ENCODE measurements at regions of chr12 and their contacts with region 1.

Region 1: DNA sequence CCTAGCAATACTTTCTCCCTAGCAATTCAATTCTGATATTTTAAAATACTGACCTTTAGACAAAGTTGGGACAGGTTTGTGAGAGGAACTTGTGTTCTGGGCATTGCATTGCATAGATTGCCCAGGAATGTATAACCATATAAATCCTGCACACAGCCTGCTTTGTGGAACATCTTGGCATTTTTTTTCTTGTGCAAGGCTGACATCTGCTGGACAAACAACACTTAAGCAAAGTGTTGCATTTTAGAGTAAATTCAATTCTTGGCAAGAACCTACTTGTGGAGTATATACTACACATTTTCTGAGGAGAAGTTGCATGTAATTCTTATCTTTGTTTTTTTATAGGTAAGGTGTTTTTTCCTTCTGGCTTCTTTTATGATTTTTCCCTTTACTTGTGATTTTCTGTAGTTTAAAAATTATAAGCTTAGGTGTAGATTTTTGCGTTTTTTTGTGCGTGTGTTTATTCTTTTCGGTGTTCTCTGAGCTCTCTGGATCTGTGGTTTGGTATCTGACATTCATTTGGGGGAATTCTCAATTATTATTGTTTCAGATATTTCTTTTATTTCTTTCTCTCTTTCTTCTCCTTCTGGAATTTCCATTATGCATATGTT is 26.4 kb downstream of the TESPA1 start:
- DNase-seq: peak in 2 of 5 donors; percentile 28 to 39
- ATAC-seq: peak in 2 of 4 donors; percentile 32 to 54
- H3K4me3 ChIP-seq: no peak overlapping the region
- H3K27ac ChIP-seq: no peak overlapping the region
- H3K4me1 ChIP-seq: peaks cover 0 to 21% (median 0%) of the 10 kb centered on the region in 12 donors
- H3K27me3 ChIP-seq: peaks cover 0 to 9% (median 0%) of the 10 kb centered on the region in 9 donors
- CTCF ChIP-seq: peak; percentile 40 to 78 (median 66)
- POLR2A ChIP-seq: no peak

Region 2: GRCh38 chr12:54579696-54580333 is 378.3 kb before region 1 on chr12:
- intact Hi-C with region 1: loop called in 1 of 10 experiments (anchors 5 kb)
- DNase-seq: peak; percentile 78 to 90 (median 81)
- ATAC-seq: peak; percentile 90 to 95 (median 92)
- H3K4me3 ChIP-seq: no peak overlapping the region
- H3K27ac ChIP-seq: peak overlapping the region in 1 of 12 donors; percentile 20
- H3K4me1 ChIP-seq: peaks cover 0 to 9% (median 0%) of the 10 kb centered on the region in 12 donors
- H3K27me3 ChIP-seq: peaks cover 0 to 8% (median 0%) of the 10 kb centered on the region in 9 donors
- CTCF ChIP-seq: peak; percentile 98 to 100 (median 99)
- POLR2A ChIP-seq: no peak

Region 3: GRCh38 chr12:54603173-54603814 is 354.9 kb before region 1 on chr12:
- intact Hi-C with region 1: loop called in 9 of 10 experiments (anchors 5 to 10 kb)
- DNase-seq: peak in 2 of 5 donors; percentile 40 to 53
- ATAC-seq: peak in 3 of 4 donors; percentile 65 to 82 (median 79)
- H3K4me3 ChIP-seq: no peak overlapping the region
- H3K27ac ChIP-seq: no peak overlapping the region
- H3K4me1 ChIP-seq: no peaks in the 10 kb centered on the region
- H3K27me3 ChIP-seq: no peaks in the 10 kb centered on the region
- CTCF ChIP-seq: peak; percentile 51 to 82 (median 68)
- POLR2A ChIP-seq: no peak

Region 4: DNA sequence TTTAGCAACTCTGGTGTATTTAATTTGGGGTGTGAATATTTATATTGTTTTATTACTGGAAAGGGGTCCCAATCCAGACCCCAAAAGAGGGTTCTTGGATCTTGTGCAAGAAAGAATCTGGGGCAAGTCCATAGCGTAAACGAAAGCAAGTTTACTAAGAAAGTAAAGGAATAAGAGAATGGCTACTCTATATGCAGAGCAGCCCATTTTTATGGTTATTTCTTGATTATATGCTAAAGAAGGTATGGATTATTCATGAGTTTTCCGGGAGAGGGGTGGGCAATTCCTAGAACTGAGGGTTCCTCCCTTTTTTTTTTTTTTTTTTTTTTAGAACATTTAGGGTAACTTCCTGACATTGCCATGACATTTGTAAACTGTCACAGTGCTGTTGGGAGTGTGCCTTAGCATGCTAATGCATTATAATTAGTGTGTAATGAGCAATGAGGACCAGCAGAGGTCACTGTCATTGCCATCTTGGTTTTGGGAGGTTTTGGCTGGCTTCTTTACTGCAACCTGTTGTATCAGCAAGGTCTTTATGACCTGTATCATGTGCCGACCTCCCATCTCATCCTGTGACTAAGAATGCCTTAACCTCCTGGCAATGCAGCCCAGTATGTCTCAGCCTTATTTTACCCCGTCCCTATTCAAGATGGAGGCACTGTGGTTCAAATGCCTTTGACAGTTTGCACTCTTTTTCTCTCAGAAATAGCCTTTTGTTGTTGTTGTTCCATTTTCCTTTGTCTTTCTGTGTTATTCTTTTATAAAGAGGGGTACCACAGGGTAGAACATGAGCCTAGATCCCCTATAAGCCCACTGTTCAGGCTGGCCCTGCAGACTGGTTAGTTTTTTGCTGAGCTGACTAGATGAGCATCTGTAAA is 234.5 kb before region 1 on chr12:
- intact Hi-C with region 1: loop called in 2 of 10 experiments (anchors 5 to 10 kb)
- DNase-seq: no peak
- ATAC-seq: no peak
- H3K4me3 ChIP-seq: no peak overlapping the region
- H3K27ac ChIP-seq: no peak overlapping the region
- H3K4me1 ChIP-seq: no peaks in the 10 kb centered on the region
- H3K27me3 ChIP-seq: peaks cover 0 to 25% (median 4%) of the 10 kb centered on the region in 9 donors
- CTCF ChIP-seq: peak in 11 of 12 donors; percentile 27 to 51 (median 35)
- POLR2A ChIP-seq: no peak

Region 5: GRCh38 chr12:54853995-54854566 is 104.1 kb before region 1 on chr12 and contains the start of gene MUCL1:
- intact Hi-C with region 1: loop called in 7 of 10 experiments (anchors 2 to 10 kb)
- DNase-seq: peak in 2 of 5 donors; percentile 20 to 21
- ATAC-seq: peak in 3 of 4 donors; percentile 59 to 75 (median 59)
- H3K4me3 ChIP-seq: no peak within 1 kb of the TSS
- H3K27ac ChIP-seq: no peak within 1 kb of the TSS
- H3K4me1 ChIP-seq: peaks cover 0 to 5% (median 0%) of the 10 kb centered on the region in 12 donors
- H3K27me3 ChIP-seq: no peaks in the 10 kb centered on the region
- CTCF ChIP-seq: peak; percentile 35 to 84 (median 54)
- POLR2A ChIP-seq: no peak
- total RNA-seq, gene MUCL1: not detected

Region 6: GRCh38 chr12:54891717-54892554 is 66.2 kb before region 1 on chr12:
- intact Hi-C with region 1: no loop called
- DNase-seq: no peak
- ATAC-seq: no peak
- H3K4me3 ChIP-seq: no peak overlapping the region
- H3K27ac ChIP-seq: no peak overlapping the region
- H3K4me1 ChIP-seq: no peaks in the 10 kb centered on the region
- H3K27me3 ChIP-seq: peaks cover 0 to 4% (median 0%) of the 10 kb centered on the region in 9 donors
- CTCF ChIP-seq: no peak
- POLR2A ChIP-seq: no peak

Region 7: DNA sequence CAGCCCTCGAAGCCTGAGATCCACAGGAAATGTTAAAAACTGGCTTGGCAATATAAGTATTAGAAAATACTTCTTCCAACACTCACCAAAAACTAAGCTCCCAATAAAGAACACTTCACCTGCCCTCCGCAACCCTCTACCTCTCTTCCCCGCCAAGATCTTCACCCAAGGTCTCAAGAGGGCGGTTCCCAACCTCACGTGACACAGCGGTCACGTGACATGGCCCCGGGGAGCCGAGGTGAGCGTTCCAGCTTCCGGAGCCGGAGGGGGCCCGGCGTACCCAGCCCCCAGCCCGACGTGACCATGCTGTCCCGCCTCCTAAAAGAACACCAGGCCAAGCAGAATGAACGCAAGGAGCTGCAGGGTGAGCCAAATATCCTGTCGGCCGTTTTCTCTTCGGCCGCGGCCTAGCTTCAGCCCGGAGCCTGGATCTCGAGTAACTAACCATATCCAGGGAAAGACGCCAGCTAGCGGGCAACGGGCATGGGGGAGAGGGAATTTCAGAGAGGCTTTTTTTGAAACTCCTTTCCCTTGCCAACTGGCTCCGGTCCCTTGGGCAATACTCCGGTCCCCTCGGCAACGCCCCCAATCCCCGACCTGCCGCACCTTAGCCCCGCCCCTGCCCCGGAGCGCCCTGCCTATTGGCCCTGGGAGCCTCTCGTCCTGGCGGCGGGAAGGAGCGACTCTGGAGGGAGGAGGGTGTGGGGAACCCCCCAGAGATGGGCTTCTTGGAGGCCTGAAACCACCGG is 757.9 kb after region 1 on chr12 and contains the start of gene BLOC1S1:
- intact Hi-C with region 1: no loop called
- DNase-seq: peak; percentile 91 to 96 (median 93)
- ATAC-seq: peak; percentile 56 to 75 (median 64)
- H3K4me3 ChIP-seq: peak within 1 kb of the TSS; percentile 56 to 93 (median 72)
- H3K27ac ChIP-seq: peak within 1 kb of the TSS; percentile 89 to 99 (median 94)
- H3K4me1 ChIP-seq: peaks cover 3 to 83% (median 64%) of the 10 kb centered on the region in 12 donors
- H3K27me3 ChIP-seq: no peaks in the 10 kb centered on the region
- CTCF ChIP-seq: peak in 3 of 12 donors; percentile 12 to 15 (median 14)
- POLR2A ChIP-seq: peak in 1 of 2 donors; percentile 55
- total RNA-seq, gene BLOC1S1: 71.3 to 173 (median 131) TPM